ENCODE measurements at regions of chr6 and their contacts with region 1.

Region 1: GRCh38 chr6:113414511-113414910 is 442.6 kb upstream of the MARCKS start:
- DNase-seq: peak in 2 of 3 donors; percentile 37 to 48
- ATAC-seq: peak; percentile 89 to 99 (median 90)
- H3K4me3 ChIP-seq: no peak overlapping the region
- H3K27ac ChIP-seq: no peak overlapping the region
- H3K4me1 ChIP-seq: no peaks in the 10 kb centered on the region
- H3K27me3 ChIP-seq: no peaks in the 10 kb centered on the region
- CTCF ChIP-seq: peak; percentile 43 to 57 (median 54)
- POLR2A ChIP-seq: no peak

Region 2: DNA sequence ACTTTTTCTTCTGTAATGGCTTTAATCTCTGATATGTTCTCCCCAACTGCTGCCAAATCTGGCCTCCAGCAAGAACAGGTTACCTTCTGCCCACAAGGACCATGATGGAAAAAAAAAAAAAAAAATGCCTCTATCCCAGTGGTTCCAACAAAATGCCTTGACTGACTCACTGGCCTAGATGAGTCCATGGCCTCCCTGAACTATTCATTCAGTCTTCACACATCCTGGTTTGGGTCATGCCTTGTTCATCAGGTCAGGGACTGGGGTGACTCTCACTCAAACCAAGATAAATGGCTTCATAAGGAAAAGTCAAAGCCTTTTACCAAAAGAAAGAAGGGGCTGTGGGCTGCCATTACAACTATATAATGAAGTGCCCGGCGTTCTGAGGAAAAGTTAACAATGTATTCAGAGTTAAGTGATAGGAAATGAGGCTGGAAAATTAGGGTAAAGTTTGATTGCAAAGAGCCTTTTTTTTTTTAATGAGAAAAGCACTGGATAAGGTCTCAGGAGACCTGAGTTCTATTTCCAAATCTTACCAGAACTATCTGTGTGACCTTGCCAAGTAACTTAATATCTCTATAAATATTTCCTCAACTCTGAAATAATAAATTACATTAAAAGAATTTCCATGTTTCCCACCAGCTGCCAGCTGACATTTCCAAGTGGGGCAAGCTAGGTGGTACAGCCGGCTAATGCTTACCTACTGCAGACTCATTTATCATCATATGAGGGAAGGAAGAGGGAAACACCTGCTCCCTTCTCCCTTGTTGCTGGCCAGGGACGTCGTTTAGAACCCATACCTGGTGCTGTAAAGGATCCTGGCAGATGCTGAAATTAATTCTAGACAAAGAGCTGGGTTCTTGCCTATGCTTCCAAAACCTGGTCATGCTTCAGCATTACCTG is 62.7 kb after region 1 on chr6:
- intact Hi-C with region 1: no loop called
- DNase-seq: no peak
- ATAC-seq: no peak
- H3K4me3 ChIP-seq: no peak overlapping the region
- H3K27ac ChIP-seq: no peak overlapping the region
- H3K4me1 ChIP-seq: no peaks in the 10 kb centered on the region
- H3K27me3 ChIP-seq: no peaks in the 10 kb centered on the region
- CTCF ChIP-seq: no peak
- POLR2A ChIP-seq: no peak

Region 3: GRCh38 chr6:113662688-113663333 is 248.3 kb after region 1 on chr6:
- intact Hi-C with region 1: no loop called
- DNase-seq: no peak
- ATAC-seq: no peak
- H3K4me3 ChIP-seq: no peak overlapping the region
- H3K27ac ChIP-seq: no peak overlapping the region
- H3K4me1 ChIP-seq: peaks cover 0 to 7% (median 0%) of the 10 kb centered on the region in 4 donors
- H3K27me3 ChIP-seq: no peaks in the 10 kb centered on the region
- CTCF ChIP-seq: no peak
- POLR2A ChIP-seq: no peak

Region 4: DNA sequence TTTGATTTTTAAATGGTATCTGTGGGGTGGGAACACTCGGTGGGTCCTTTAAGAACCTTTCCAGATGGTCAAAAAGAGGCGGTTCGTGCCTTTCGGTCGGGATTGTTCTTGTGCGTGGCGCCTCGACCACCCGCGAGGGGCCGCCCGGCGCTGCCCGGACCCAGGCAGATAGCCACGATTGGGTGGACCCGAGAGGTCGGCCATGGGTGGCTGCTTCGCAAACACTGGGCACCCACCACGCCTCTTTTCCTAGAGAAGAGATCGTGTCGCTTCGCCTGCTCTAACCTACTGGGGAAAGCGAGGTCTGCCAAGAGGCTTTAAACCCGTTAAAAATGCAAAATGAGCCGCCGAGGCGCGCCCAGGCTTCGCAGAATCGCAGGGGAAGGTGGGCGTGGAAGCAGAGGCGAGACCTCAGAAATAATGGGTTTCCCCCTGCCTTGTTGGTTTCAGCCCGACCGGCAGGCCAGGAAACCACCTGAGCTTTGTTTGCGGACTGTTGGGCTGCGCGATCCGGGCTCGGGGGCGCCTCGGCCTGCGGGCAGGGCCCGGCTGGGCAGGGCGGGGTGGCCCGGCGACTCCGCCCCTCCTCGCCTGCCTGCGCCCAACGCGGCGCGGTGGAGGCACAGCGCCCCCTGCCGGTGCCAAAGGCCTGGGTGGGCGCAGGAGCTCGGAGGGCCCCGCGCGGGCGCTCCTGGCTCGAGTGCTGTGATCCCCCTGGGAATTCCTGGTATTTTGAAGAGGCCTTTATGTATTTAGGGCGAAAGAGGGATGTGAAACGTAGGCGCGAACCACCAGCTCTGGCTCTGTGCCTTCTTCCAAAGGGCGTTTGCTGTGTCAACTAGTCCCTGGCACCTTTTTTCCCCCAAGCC is 444.2 kb after region 1 on chr6:
- intact Hi-C with region 1: loop called in 1 of 2 experiments (anchors 10 kb)
- DNase-seq: peak; percentile 87 to 94 (median 92)
- ATAC-seq: peak; percentile 82 to 96 (median 90)
- H3K4me3 ChIP-seq: peak overlapping the region; percentile 66 to 75 (median 68)
- H3K27ac ChIP-seq: peak overlapping the region; percentile 86 to 95 (median 90)
- H3K4me1 ChIP-seq: peaks cover 0 to 24% (median 2%) of the 10 kb centered on the region in 4 donors
- H3K27me3 ChIP-seq: peaks cover 0 to 5% of the 10 kb centered on the region in 2 donors
- CTCF ChIP-seq: peak; percentile 97 to 100 (median 98)
- POLR2A ChIP-seq: peak; percentile 81